Sigmoid colon (tissue), 7 donors: ENCODE measurements at regions of chr17 and their contacts with region 1.

Region 1: DNA sequence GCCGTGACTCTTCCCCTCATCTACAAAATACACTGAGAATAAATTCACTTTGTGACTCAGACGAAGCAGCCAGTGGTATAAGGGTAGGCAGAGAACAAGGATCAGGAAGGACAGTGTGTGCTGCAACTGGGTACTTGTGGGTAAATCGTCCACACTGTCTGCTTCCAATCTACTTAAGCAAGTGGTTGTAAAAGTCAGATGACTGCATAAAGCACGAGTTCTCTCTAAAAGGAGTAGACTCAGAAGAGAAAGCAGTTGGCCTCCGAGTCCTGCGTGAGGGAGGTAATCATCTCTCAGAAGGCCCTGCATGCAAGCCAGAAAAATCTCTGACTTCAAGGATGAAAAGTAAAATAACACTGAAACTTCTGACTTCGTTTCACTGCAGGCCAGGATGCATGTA is 43.1 kb downstream of the ANKFY1 start:
- DNase-seq: peak; percentile 93
- H3K4me3 ChIP-seq: peak overlapping the region in 2 of 4 donors; percentile 2 to 5
- H3K27ac ChIP-seq: peak overlapping the region; percentile 78 to 94 (median 88)
- H3K4me1 ChIP-seq: peaks cover 0 to 70% (median 43%) of the 10 kb centered on the region in 4 donors
- H3K27me3 ChIP-seq: no peaks in the 10 kb centered on the region
- CTCF ChIP-seq: no peak
- EP300 ChIP-seq: peak; percentile 91 to 100 (median 96)
- POLR2A ChIP-seq: peak; percentile 56 to 82

Region 2: DNA sequence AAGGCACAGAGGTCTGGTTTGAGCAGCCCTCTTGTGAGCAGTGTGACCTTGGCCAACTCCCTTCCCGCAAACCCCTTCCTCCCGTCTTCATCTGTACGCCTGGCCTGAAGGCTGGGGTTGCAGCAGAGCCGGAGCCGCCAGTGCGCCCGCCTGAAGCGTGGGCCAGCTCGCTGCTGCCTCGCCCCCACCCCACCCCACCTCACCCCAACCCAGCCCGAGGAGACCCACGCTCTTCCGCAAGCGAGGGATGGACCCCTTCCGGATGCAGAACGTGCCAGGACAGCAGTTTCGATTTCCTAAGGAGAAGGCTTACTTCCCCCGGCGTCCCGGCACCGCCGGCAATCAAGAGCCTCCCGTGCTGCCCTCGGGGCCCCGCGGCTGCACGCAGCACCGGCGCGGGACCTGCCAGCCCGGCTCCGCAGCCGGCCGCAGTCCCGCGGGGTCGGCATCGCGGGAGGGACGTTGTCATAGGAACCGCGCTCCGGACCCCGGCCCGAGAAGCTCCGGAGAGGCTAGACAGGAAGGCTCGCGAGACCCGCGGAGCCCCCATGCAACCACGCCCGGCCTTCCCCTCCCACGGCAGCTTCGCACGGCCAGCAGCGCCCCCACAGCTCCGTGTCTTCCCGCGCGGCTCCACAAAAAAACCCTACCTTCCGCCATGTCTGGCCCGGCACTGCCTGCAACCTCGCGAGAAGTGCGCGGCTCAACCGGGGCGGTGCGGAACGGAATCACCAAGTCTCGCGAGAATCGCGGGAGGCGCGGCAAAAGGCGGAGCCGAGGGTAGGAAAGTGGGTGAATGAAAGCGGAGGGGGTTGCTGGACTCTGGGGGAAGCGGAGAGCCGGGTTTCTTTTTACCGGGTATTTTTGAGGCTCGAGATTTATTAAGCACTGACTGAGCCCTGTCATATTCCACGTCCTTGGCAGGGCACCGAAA is 42.9 kb after region 1 on chr17 and contains the start of gene ANKFY1:
- intact Hi-C with region 1: loop called (anchors 2 kb)
- DNase-seq: peak; percentile 98
- H3K4me3 ChIP-seq: peak within 1 kb of the TSS; percentile 93 to 100 (median 99)
- H3K27ac ChIP-seq: peak within 1 kb of the TSS; percentile 87 to 96 (median 94)
- H3K4me1 ChIP-seq: peaks cover 0 to 33% (median 29%) of the 10 kb centered on the region in 4 donors
- H3K27me3 ChIP-seq: no peaks in the 10 kb centered on the region
- CTCF ChIP-seq: no peak
- EP300 ChIP-seq: no peak
- POLR2A ChIP-seq: peak; percentile 73 to 75
- total RNA-seq, gene ANKFY1: 52.6 to 68.0 (median 59.8) TPM

Region 3: GRCh38 chr17:4304417-4305027 is 83.9 kb after region 1 on chr17:
- intact Hi-C with region 1: loop called (anchors 1 kb)
- DNase-seq: no peak
- H3K4me3 ChIP-seq: no peak overlapping the region
- H3K27ac ChIP-seq: peak overlapping the region in 3 of 4 donors; percentile 11 to 42 (median 34)
- H3K4me1 ChIP-seq: peaks cover 0 to 62% (median 35%) of the 10 kb centered on the region in 4 donors
- H3K27me3 ChIP-seq: no peaks in the 10 kb centered on the region
- CTCF ChIP-seq: peak; percentile 18 to 75 (median 51)
- EP300 ChIP-seq: no peak
- POLR2A ChIP-seq: no peak